ENCODE measurements at regions of chr6 and their contacts with region 1.

Region 1: GRCh38 chr6:125301435-125302391 is at the start of gene HDDC2:
- DNase-seq: peak; percentile 78 to 91
- H3K4me3 ChIP-seq: peak within 1 kb of the TSS; percentile 70 to 84 (median 74)
- H3K27ac ChIP-seq: peak within 1 kb of the TSS; percentile 90 to 95 (median 93)
- H3K4me1 ChIP-seq: peaks cover 10 to 28% (median 17%) of the 10 kb centered on the region in 4 donors
- H3K27me3 ChIP-seq: no peaks in the 10 kb centered on the region
- CTCF ChIP-seq: no peak
- EP300 ChIP-seq: no peak
- POLR2A ChIP-seq: no peak
- total RNA-seq, gene HDDC2: 7.6 to 48.0 (median 28.5) TPM in 4 of 5 donors, not detected in the other

Region 2: DNA sequence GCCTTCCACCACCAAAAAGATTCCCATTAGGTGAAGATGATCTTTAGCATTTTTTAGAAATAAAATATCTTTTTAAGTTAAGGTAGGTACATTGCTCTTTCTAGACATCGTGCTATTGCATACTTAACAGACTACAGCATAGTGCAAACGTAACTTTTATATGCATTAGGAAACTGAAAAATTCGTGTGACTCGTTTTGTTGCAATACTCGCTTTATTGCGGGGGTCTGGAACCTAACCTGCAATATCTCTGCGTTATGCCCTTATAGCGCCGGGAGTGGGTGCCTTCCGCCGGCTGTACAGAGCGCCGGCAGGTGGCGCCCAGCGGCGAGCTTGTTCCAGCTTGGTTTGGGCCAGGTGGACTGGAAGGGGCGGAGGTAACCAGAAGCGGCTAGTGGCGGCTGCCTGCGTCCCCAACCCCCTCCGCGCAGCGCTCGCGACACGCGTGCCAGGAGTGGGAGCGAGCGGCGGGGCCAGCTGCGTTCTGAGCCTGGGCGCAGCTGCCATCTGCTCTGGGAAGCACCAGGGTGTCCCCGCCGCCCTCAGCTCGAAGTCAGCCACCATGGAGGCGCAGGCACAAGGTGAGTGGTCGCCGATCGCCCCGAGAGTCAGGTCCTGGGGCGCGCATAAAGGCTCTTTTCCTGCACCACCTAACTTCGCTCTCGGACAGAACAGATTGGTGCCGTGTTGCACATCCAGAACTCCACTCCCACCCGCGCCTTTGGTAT is 148.2 kb before region 1 on chr6 and contains the start of gene TPD52L1:
- intact Hi-C with region 1: loop called (anchors 5 kb)
- DNase-seq: peak; percentile 87 to 95
- H3K4me3 ChIP-seq: peak within 1 kb of the TSS; percentile 62 to 77 (median 72)
- H3K27ac ChIP-seq: peak within 1 kb of the TSS; percentile 57 to 83 (median 78)
- H3K4me1 ChIP-seq: peaks cover 0 to 25% (median 18%) of the 10 kb centered on the region in 4 donors
- H3K27me3 ChIP-seq: peaks cover 0 to 12% (median 0%) of the 10 kb centered on the region in 3 donors
- CTCF ChIP-seq: peak in 5 of 7 experiments; percentile 55 to 80 (median 75)
- EP300 ChIP-seq: no peak
- POLR2A ChIP-seq: no peak
- total RNA-seq, gene TPD52L1: 14.8 to 100 (median 23.3) TPM

Region 3: DNA sequence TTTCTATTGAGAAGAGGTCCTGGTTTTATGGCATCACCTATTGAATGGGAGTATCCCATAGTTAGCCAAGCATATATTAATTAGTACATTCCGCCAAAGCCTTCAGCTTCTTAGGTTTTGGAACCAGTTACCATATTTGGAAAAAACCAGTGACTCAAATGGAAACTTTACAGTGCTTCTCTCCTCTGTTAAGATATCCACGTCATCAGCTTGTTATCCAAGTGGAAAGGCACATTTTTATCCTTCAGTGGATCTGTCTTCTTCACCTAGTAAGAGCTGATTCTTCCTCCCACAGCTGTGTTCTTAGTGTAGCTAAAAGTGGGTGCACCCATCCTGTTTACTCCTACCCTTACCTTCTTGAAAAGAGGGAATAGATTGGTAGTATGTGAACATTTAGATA is 113.7 kb before region 1 on chr6:
- intact Hi-C with region 1: no loop called
- DNase-seq: no peak
- H3K4me3 ChIP-seq: no peak overlapping the region
- H3K27ac ChIP-seq: no peak overlapping the region
- H3K4me1 ChIP-seq: peaks cover 0 to 27% (median 10%) of the 10 kb centered on the region in 4 donors
- H3K27me3 ChIP-seq: no peaks in the 10 kb centered on the region
- CTCF ChIP-seq: no peak
- EP300 ChIP-seq: no peak
- POLR2A ChIP-seq: no peak